AG04450 (cell line): ENCODE measurements at regions of chr5 and their contacts with region 1.

Region 1: DNA sequence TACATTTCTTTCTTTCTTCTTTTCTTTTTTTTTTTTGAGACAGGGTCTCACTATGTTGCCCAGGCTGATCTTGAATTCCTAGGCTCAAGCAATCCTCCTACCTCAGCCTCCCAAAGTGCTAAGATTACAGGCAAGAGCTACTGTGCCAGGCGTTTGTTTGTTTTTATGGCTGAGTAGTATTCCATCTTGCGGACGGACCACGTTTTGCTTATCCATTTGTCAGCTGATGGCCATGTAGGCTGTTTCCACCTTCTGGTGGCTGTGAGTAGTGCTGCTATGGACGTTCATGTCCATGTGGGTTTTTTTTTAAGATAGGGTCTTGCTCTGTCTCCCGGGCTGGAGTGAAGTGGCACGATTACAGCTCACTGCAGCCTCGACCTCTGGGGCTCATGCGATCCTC is 2.5 kb downstream of the DOK3 start:
- DNase-seq: no peak
- H3K4me3 ChIP-seq: no peak overlapping the region
- H3K27ac ChIP-seq: no peak overlapping the region
- H3K27me3 ChIP-seq: no peaks in the 10 kb centered on the region
- CTCF ChIP-seq: peak; percentile 30

Region 2: GRCh38 chr5:177431317-177432142 is 75.6 kb before region 1 on chr5:
- CTCF ChIA-PET with region 1: no interaction called
- POLR2A ChIA-PET with region 1: no interaction called
- DNase-seq: no peak
- H3K4me3 ChIP-seq: no peak overlapping the region
- H3K27ac ChIP-seq: no peak overlapping the region
- H3K27me3 ChIP-seq: no peaks in the 10 kb centered on the region
- CTCF ChIP-seq: no peak

Region 3: GRCh38 chr5:177491429-177491945 is 15.7 kb before region 1 on chr5:
- CTCF ChIA-PET with region 1: interaction called, 11 read pairs
- POLR2A ChIA-PET with region 1: interaction called, 10 read pairs
- DNase-seq: no peak
- H3K4me3 ChIP-seq: no peak overlapping the region
- H3K27ac ChIP-seq: peak overlapping the region; percentile 11
- H3K27me3 ChIP-seq: no peaks in the 10 kb centered on the region
- CTCF ChIP-seq: peak; percentile 73